ENCODE measurements at regions of chr16 and their contacts with region 1.

Region 1: GRCh38 chr16:57576429-57576870 is 34.0 kb downstream of the ADGRG5 start:
- DNase-seq: peak; percentile 38
- H3K4me3 ChIP-seq: no peak overlapping the region
- H3K27ac ChIP-seq: no peak overlapping the region
- H3K4me1 ChIP-seq: no peaks in the 10 kb centered on the region
- H3K27me3 ChIP-seq: no peaks in the 10 kb centered on the region
- CTCF ChIP-seq: peak; percentile 99 to 100

Region 2: GRCh38 chr16:57462209-57462977 is 114.1 kb before region 1 on chr16 and contains the start of gene POLR2C:
- CTCF ChIA-PET with region 1: no interaction called
- dilution Hi-C with region 1: no loop called
- in situ Hi-C with region 1: no loop called
- intact Hi-C with region 1: no loop called
- DNase-seq: peak; percentile 75
- H3K4me3 ChIP-seq: peak within 1 kb of the TSS; percentile 55 to 94 (median 88)
- H3K27ac ChIP-seq: peak within 1 kb of the TSS; percentile 35
- H3K4me1 ChIP-seq: peaks cover 5% of the 10 kb centered on the region
- H3K27me3 ChIP-seq: no peaks in the 10 kb centered on the region
- CTCF ChIP-seq: peak; percentile 84 to 89
- total RNA-seq, gene POLR2C: 45.1 to 82.2 TPM

Region 3: DNA sequence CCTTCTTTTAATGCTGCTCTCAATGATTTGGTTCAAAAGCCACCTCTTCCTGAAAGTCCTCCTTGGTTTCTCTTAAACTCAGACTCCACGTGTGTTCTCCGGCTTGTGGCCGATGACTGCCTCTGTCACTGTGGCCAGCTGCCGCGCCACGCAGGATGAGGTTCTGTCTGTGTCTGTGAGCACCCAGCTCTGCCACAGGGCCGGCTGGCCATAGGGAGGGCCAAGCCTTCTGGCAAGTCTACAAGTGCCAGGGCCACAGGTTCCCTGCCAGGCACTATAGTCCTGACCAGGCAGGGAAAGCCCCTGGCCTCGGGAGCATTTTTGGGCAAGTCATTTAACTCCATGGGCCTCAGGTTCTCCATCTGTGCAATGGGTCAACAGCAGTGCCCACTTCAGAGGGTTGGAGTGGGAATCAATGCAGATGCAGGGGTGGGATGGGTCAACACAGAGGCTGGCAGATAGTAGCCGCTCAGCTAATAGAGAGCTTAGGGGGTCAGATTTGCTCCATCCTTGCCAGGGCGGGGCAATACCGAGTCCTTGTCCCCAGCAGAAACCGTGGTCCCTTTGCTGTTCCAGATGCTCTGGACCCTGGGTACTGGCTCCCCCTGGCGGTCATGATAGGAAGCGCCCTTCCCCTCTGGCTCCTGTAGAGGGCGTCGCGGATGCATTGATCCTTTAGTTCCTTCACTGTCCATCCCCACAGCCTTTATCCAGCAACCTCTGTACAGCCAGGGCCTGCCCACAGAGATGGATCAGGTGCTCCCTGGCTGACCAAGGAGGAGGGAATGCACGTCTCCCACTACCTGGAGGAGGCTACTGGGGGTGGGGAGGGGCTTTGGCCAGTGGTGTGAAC is 72.4 kb after region 1 on chr16:
- CTCF ChIA-PET with region 1: no interaction called
- dilution Hi-C with region 1: no loop called
- in situ Hi-C with region 1: no loop called
- intact Hi-C with region 1: loop called (anchors 1 kb)
- DNase-seq: peak; percentile 70
- H3K4me3 ChIP-seq: no peak overlapping the region
- H3K27ac ChIP-seq: no peak overlapping the region
- H3K4me1 ChIP-seq: peaks cover 52% of the 10 kb centered on the region
- H3K27me3 ChIP-seq: no peaks in the 10 kb centered on the region
- CTCF ChIP-seq: peak; percentile 100

Region 4: GRCh38 chr16:57734925-57735754 is 158.7 kb after region 1 on chr16:
- CTCF ChIA-PET with region 1: no interaction called
- dilution Hi-C with region 1: no loop called
- in situ Hi-C with region 1: no loop called
- intact Hi-C with region 1: loop called (anchors 1 kb)
- DNase-seq: peak; percentile 100
- H3K4me3 ChIP-seq: peak overlapping the region; percentile 84 to 100 (median 96)
- H3K27ac ChIP-seq: peak overlapping the region; percentile 89
- H3K4me1 ChIP-seq: peaks cover 13% of the 10 kb centered on the region
- H3K27me3 ChIP-seq: no peaks in the 10 kb centered on the region
- CTCF ChIP-seq: no peak

Region 5: GRCh38 chr16:57863434-57864160 is 287.1 kb after region 1 on chr16:
- CTCF ChIA-PET with region 1: no interaction called
- dilution Hi-C with region 1: no loop called
- in situ Hi-C with region 1: no loop called
- intact Hi-C with region 1: loop called (anchors 2 kb)
- DNase-seq: peak; percentile 45
- H3K4me3 ChIP-seq: no peak overlapping the region
- H3K27ac ChIP-seq: no peak overlapping the region
- H3K4me1 ChIP-seq: peaks cover 13% of the 10 kb centered on the region
- H3K27me3 ChIP-seq: no peaks in the 10 kb centered on the region
- CTCF ChIP-seq: peak; percentile 59 to 86

Region 6: DNA sequence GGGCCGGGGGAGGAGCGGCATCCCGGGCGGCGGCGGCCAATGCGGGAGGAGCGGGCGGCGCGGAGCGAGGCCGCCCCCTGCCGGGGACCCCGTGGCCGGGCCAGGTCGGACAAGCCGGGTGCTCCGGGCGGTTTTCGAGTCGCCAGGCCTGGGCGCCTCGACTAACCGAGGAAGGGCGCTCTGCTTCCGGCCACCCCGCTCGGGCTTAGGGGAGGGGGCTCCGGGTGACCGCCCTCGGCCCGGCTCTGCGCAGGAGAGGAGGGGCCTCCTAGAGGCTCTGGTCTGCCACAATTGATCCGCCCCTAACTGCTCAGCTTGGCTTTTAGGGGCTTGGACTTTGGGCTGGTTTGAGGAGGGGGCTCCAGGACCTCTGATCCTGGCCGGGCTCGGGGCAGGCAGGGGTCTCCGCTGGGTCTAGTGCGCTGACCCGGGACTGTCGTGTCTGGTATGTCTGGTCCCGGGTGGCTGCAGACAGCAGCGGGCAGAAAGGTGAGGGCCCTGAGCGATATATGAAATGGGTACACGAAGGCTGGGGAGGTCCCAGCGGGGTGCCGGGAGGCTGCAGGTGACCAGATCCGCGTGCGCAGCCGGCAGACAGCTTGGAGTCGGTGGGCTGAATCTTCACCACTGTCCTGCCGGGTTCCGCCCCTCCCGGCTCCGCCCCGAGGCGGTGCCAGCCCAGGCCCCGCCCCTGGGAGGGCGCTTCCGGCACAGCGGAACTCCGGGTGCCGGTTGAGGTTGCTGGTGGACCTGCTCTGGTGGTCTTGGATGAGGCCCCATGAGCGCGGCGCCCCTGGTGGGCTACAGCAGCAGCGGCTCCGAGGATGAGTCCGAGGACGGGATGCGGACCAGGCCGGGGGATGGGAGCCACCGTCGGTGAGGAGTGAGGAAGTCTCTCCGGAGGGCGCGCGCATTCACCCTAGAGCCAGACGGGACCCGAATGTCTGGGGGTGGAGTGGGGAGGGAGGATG is 424.5 kb after region 1 on chr16 and contains the start of gene USB1:
- CTCF ChIA-PET with region 1: no interaction called
- dilution Hi-C with region 1: no loop called
- in situ Hi-C with region 1: loop called in 1 of 2 experiments (anchors 25 kb)
- intact Hi-C with region 1: loop called (anchors 2 kb)
- DNase-seq: peak; percentile 83
- H3K4me3 ChIP-seq: peak within 1 kb of the TSS; percentile 66 to 93 (median 85)
- H3K27ac ChIP-seq: peak within 1 kb of the TSS; percentile 49
- H3K4me1 ChIP-seq: peaks cover 33% of the 10 kb centered on the region
- H3K27me3 ChIP-seq: no peaks in the 10 kb centered on the region
- CTCF ChIP-seq: peak; percentile 19 to 64
- total RNA-seq, gene USB1: 36.2 to 61.1 TPM

Region 7: GRCh38 chr16:58222532-58223316 is 646.3 kb after region 1 on chr16:
- CTCF ChIA-PET with region 1: no interaction called
- dilution Hi-C with region 1: no loop called
- in situ Hi-C with region 1: no loop called
- intact Hi-C with region 1: no loop called
- DNase-seq: peak; percentile 50
- H3K4me3 ChIP-seq: no peak overlapping the region
- H3K27ac ChIP-seq: no peak overlapping the region
- H3K4me1 ChIP-seq: peaks cover 7% of the 10 kb centered on the region
- H3K27me3 ChIP-seq: no peaks in the 10 kb centered on the region
- CTCF ChIP-seq: no peak

Measured in mammary epithelial cell (primary cell).